Psoas muscle (tissue), 8 donors: ENCODE measurements at regions of chr19 and their contacts with region 1.

Region 1: GRCh38 chr19:12278713-12279112 is 16.0 kb downstream of the ZNF44 start:
- DNase-seq: no peak
- ATAC-seq: no peak
- H3K4me3 ChIP-seq: no peak overlapping the region
- H3K27ac ChIP-seq: no peak overlapping the region
- H3K4me1 ChIP-seq: no peaks in the 10 kb centered on the region
- H3K27me3 ChIP-seq: no peaks in the 10 kb centered on the region
- CTCF ChIP-seq: no peak

Region 2: DNA sequence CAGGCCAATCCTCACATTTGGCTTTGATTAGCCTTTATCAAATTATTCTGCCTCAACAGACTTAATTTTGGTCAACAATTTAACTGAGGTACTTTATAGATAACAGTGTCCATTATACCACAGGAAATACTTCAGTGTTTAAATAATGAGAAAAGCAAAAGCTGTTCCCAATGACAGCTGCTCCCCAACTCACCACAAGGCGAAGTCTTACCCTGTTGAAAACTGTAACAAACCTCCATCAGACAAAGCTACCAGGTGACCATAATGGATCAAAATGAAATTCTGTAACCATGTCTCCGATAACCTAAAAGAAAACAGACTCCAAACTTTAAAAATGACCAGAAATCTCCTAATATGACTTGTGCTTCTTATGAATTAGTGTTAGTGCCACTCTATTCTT is 34.3 kb before region 1 on chr19:
- intact Hi-C with region 1: loop called in 1 of 2 experiments (anchors 5 kb)
- DNase-seq: no peak
- ATAC-seq: no peak
- H3K4me3 ChIP-seq: no peak overlapping the region
- H3K27ac ChIP-seq: no peak overlapping the region
- H3K4me1 ChIP-seq: no peaks in the 10 kb centered on the region
- H3K27me3 ChIP-seq: no peaks in the 10 kb centered on the region
- CTCF ChIP-seq: no peak